PC-3 (cell line): ENCODE measurements at regions of chr10 and their contacts with region 1.

Region 1: GRCh38 chr10:34637418-34637911 is 177.6 kb downstream of the PARD3 start:
- DNase-seq: peak; percentile 91
- ATAC-seq: peak; percentile 48
- H3K4me3 ChIP-seq: no peak overlapping the region
- H3K27ac ChIP-seq: no peak overlapping the region
- H3K4me1 ChIP-seq: peaks cover 18% of the 10 kb centered on the region
- H3K27me3 ChIP-seq: no peaks in the 10 kb centered on the region
- CTCF ChIP-seq: peak; percentile 100

Region 2: DNA sequence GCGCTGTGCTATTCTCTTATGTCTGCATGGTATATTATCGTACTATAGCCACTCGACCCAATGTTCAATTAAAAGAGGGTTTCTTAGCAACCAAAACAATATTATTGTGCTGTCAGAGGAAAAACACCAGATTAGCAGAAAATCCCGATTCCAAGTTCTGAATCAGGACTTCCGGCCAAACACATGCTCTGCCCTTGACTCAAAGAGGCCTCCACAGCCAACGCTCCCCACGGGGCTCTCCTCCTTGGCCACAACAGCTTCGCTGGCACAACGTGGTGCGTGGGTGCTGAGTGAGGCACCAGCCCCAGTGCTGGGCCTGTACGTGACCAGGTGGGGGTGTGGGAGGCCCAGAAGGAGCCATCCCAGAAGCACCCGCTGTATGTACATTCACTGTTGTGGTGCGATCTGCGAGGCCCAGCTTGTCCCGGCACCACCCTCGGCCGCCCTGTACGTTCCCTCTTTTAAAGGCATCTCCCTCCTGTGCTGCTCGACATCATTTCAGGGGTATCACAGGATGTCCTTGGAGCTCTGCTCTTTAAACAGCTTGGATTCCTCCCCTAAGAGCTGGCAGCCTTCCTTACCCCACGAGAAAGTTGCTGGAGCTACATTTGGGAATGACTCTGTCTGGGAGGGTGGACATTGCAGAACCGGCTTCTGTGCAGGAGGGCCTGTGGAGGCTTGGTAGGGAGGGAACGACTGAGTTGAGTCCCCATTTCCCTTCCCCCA is 558.6 kb before region 1 on chr10:
- CTCF ChIA-PET with region 1: no interaction called
- POLR2A ChIA-PET with region 1: no interaction called
- intact Hi-C with region 1: loop called (anchors 1 kb)
- DNase-seq: no peak
- ATAC-seq: no peak
- H3K4me3 ChIP-seq: no peak overlapping the region
- H3K27ac ChIP-seq: no peak overlapping the region
- H3K4me1 ChIP-seq: no peaks in the 10 kb centered on the region
- H3K27me3 ChIP-seq: no peaks in the 10 kb centered on the region
- CTCF ChIP-seq: no peak

Region 3: DNA sequence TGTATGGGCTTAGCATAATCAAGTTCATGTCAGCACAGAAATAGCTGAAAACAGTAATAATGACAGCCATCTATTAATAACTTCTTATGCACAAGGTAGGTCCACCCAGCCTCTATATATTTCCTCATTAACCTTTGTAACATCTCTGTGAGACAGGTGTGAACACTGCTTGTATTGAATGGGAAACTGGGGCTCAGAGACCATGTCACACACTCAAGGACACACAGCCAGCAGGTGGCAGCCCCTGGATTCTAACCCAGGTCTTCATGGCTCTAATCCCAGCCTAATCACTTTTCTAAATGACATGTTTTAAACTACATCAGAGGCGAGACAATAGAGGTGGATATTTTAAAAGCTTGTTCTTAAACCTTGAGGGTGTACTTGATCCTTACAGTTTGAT is 413.8 kb before region 1 on chr10:
- CTCF ChIA-PET with region 1: interaction called, 5 read pairs
- POLR2A ChIA-PET with region 1: no interaction called
- intact Hi-C with region 1: loop called (anchors 1 kb)
- DNase-seq: peak; percentile 35
- ATAC-seq: peak; percentile 18; the same call in 1 of the 2 replicates
- H3K4me3 ChIP-seq: no peak overlapping the region
- H3K27ac ChIP-seq: no peak overlapping the region
- H3K4me1 ChIP-seq: peaks cover 11% of the 10 kb centered on the region; the same call in 1 of the 2 replicates
- H3K27me3 ChIP-seq: no peaks in the 10 kb centered on the region
- CTCF ChIP-seq: peak; percentile 78

Region 4: DNA sequence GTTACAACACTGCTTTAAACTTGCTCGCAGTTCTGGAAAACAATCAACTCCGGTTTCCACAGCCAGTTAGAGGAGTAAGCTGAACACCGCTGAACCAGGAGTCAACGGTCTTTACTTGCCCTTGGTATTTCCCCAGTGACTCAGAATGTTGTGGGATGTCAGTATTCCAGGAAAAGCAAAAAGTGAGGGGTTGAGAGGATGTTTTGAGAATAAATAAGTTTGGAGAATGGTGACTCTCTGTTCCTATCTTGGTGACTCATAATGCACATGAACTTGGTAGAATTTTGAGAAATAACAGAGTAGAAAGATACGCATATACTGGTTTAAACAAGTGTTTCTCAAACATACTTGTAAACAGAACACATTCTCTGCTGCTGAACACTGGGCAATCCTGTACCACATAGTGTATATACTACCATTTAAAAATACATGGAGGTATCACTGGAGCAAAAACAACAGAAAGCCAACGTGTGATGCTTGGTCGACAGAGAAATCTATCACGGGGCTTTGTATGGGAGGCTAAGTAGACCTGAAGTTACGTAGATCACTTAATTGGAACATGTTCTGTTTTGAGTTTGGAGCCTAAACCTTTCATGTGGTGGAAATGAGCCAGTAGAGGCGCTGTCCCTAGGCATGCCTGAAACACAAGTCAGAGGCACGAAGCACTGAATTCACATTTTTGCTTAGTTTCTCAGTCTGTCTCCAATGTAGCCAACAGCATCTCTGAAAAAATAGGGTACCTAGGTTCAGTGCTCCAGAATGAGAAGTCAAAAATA is 356.7 kb before region 1 on chr10:
- CTCF ChIA-PET with region 1: no interaction called
- POLR2A ChIA-PET with region 1: no interaction called
- intact Hi-C with region 1: loop called (anchors 1 kb)
- DNase-seq: peak; percentile 100
- ATAC-seq: peak; percentile 99
- H3K4me3 ChIP-seq: peak overlapping the region; percentile 35; the same call in 1 of the 2 replicates
- H3K27ac ChIP-seq: peak overlapping the region; percentile 54
- H3K4me1 ChIP-seq: peaks cover 22% of the 10 kb centered on the region
- H3K27me3 ChIP-seq: no peaks in the 10 kb centered on the region
- CTCF ChIP-seq: peak; percentile 40; the same call in 1 of the 2 replicates

Region 5: DNA sequence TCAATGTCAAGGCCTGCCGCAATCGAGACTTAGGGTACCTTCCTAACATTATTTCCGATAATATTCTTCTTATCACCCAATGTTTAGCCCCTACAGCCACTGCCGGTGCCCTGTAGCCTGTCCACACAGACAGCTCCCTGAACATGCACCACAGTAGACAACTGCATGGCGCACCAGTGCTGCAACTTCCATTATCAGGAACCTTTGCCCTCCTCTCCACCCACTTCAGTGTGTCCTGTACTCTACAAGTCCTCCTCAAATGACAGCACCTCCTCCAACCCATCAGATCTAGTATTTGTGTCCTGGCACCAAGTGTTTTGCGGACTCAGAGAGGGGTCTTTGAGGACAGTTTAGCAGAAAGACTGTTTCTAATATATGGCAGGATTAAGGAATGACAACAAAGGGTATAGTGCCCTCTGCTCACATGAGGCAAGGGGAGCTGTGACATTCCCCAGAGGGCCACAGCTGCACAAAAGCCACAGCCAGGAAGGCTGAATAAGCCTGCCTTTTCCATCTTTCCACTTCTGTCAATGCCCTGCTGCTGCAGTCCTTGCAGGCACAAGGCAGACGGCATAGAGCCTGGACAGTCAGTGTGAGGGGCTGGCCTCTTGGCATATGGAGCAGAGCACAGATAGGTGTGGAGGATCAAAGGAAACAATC is 157.8 kb before region 1 on chr10:
- CTCF ChIA-PET with region 1: no interaction called
- POLR2A ChIA-PET with region 1: no interaction called
- intact Hi-C with region 1: loop called (anchors 5 kb)
- DNase-seq: no peak
- ATAC-seq: no peak
- H3K4me3 ChIP-seq: no peak overlapping the region
- H3K27ac ChIP-seq: no peak overlapping the region
- H3K4me1 ChIP-seq: peaks cover 18% of the 10 kb centered on the region
- H3K27me3 ChIP-seq: no peaks in the 10 kb centered on the region
- CTCF ChIP-seq: no peak

Region 6: DNA sequence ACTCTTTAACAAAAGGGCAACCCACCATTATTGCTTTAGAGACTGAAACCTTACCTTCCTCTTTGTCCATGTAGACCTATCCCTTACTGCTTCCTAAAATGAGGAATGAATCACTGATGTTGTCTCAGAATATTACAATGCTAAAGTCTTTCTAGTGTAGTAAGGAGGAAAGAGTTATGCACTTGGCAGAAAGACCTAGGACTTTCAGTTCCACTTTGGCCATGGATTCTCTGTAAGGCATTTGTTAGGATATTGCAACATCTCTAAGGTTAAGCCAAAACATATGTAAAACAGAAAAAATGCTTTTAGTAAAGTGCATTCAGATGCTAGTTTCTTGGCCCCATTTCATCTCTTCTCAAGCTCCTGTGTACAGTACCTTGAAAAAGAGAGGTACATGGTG is 53.3 kb before region 1 on chr10:
- CTCF ChIA-PET with region 1: interaction called, 5 read pairs
- POLR2A ChIA-PET with region 1: no interaction called
- intact Hi-C with region 1: loop called (anchors 1 kb)
- DNase-seq: peak; percentile 72
- ATAC-seq: no peak
- H3K4me3 ChIP-seq: no peak overlapping the region
- H3K27ac ChIP-seq: no peak overlapping the region
- H3K4me1 ChIP-seq: peaks cover 74% of the 10 kb centered on the region
- H3K27me3 ChIP-seq: no peaks in the 10 kb centered on the region
- CTCF ChIP-seq: no peak